Mucosa of descending colon (tissue), 3 donors: ENCODE measurements at regions of chr20 and their contacts with region 1.

Region 1: GRCh38 chr20:49330544-49331239 is 52.8 kb upstream of the ZNFX1 start:
- DNase-seq: no peak
- ATAC-seq: no peak
- H3K4me3 ChIP-seq: no peak overlapping the region
- H3K4me1 ChIP-seq: no peaks in the 10 kb centered on the region
- CTCF ChIP-seq: no peak

Region 2: DNA sequence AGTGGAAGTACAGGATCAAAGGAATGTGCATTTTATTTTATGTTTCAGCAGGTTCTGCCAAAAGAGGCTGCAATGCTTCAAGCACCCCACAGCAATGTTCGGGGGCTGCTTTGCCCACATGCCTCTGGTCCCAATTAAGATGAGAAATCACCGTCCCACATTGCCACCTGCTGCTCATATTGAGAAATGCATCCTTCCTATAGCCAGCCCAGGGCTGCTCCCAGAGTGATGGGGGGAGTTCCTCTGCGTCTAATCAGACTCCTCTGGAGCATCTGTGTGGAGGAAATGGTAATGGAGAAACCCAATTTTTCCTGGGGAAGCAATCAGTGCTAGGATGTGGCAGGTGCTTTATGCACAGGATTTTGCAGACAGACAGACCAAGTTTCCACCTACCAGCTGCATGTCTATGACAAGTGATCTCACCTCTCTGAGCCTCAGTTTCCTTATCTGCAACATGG is 203.6 kb after region 1 on chr20:
- intact Hi-C with region 1: loop called (anchors 5 kb)
- DNase-seq: peak in 1 of 3 donors; percentile 78
- ATAC-seq: peak; percentile 66
- H3K4me3 ChIP-seq: no peak overlapping the region
- H3K4me1 ChIP-seq: no peaks in the 10 kb centered on the region
- CTCF ChIP-seq: peak; percentile 60

Region 3: GRCh38 chr20:49575551-49576060 is 244.9 kb after region 1 on chr20:
- intact Hi-C with region 1: no loop called
- DNase-seq: peak in 1 of 3 donors; percentile 34
- ATAC-seq: no peak
- H3K4me3 ChIP-seq: no peak overlapping the region
- H3K4me1 ChIP-seq: no peaks in the 10 kb centered on the region
- CTCF ChIP-seq: no peak

Region 4: DNA sequence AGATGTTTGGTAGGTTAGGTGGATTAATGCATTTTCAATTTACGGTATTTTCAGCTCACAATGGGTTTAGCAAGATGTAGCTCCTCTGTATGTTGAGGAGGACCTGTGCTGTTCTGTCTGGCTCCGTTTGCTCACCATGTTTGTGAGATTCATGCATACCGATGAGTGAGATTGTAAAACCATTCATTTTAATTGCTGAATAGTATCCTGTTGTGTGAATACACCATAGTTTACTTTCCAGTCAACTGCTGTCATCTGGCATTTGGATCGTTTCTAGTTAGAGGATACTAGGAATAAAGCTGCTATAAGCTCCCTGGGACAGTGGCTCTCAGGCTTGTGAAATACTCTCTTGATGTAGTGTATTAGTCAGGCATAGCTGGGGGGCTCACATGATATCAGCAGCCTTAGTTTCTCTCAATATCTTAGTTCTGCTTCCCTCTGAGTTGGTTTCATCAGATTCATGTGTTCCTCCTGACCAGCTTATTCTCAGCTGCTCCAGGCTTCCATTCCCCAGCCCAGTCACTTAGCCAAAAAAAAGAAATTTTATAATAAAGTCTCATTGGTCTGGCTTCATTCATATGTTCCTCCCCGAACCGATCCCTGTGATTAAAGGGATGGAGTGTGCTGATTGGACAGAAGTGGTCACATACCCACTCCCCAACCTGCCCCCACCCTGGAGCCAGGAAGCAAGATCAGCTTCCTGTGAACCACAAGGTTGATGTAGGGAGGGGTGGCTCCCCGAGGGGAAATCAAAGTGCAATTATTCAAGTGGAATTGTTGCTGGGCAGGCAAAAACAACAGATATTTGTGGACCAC is 393.9 kb after region 1 on chr20:
- intact Hi-C with region 1: no loop called
- DNase-seq: no peak
- ATAC-seq: peak; percentile 60
- H3K4me3 ChIP-seq: no peak overlapping the region
- H3K4me1 ChIP-seq: peaks cover 3% of the 10 kb centered on the region
- CTCF ChIP-seq: no peak